Activated naive CD4-positive, alpha-beta T cell treated with anti-CD3 and anti-CD28 coated beads for 36 hours (primary cell): ENCODE measurements at regions of chr18 and their contacts with region 1.

Region 1: DNA sequence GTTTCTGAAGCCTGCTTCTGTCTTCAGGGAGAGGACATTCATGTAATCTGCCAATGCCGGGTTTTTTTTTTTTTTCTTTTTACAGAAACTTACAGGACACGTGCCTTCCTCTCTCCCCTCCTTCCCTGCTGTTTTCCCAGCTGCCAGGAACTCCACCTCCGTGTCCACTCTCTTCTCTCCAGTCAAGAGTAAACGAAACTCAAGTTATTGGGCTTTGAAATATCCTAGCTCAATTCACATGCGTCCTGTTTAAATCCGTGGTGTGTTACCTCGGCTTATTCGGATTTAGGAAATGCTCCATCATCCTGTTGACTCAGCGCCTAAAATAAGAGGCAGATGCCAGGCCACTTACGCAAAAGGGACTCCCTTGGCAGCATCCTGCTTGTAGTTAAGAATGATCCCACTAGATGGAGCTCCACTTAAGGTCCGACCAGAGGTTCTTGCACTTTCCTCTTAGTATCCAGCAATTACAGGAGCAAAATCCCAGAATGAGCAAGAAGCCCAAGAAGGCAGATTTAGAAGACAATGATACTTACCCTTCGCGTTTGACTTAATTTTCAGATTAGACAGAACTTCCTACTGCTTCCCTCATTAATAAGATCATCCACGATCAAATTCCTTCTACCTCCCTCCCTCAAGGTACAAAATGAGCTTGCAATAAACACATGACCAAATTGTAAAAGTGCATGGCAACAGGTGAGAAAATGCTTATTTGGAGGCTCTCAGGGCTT is 97.2 kb upstream of the ZCCHC2 start:
- DNase-seq: peak; percentile 80
- H3K4me3 Mint-ChIP-seq: peak overlapping the region; percentile 3
- H3K27ac Mint-ChIP-seq: peak overlapping the region; percentile 19
- H3K4me1 Mint-ChIP-seq: peaks cover 22% of the 10 kb centered on the region
- H3K27me3 Mint-ChIP-seq: no peaks in the 10 kb centered on the region

Region 2: GRCh38 chr18:61955644-61956043 is 470.0 kb before region 1 on chr18:
- CTCF ChIA-PET with region 1: no interaction called
- intact Hi-C with region 1: loop called (anchors 1 kb)
- DNase-seq: no peak
- H3K4me3 Mint-ChIP-seq: no peak overlapping the region
- H3K27ac Mint-ChIP-seq: no peak overlapping the region
- H3K4me1 Mint-ChIP-seq: peaks cover 30% of the 10 kb centered on the region
- H3K27me3 Mint-ChIP-seq: peaks cover 2% of the 10 kb centered on the region

Region 3: DNA sequence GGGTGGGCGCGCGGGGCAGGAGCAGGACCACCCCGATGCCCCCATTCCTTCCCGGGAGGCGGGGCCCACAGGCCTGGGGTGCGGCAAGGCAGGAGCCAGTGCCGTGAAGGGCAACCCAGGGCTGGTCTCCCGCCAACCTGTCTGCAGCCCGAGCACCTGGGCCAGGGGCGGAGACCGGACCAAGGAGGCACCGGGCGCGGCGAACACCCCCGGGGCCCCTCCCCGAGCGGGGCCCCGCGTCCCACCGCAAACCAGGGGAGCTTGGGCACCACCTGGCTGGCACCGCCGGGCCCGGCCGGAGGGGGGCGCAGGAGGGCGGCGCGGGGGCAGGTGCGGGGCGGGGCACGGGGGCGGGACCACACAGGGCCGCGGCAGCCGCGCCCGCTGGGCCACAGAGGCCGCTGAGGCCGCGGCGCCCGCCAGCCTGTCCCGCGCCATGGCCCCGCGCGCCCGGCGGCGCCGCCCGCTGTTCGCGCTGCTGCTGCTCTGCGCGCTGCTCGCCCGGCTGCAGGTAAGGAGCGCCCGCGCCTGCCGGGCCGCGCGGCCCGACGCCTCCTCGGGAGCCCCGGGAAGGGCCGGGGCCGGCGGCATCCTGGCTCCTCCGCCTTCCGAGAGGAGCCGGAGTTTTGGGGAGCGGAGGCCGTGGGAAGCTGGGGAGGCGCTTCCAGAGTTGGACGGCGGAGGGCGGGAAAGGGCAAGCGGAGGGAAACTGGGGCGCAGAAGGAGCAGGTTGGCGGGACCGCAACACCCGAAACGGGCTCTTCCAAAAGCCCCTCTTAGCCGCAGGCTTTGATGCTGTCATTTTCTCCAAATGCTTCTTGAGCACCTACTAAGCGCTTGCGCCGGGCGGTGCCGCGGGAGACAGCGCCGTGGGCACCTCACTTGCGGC is 100.5 kb before region 1 on chr18 and contains the start of gene TNFRSF11A:
- CTCF ChIA-PET with region 1: interaction called, 6 read pairs
- intact Hi-C with region 1: loop called (anchors 1 kb)
- DNase-seq: peak; percentile 73
- H3K4me3 Mint-ChIP-seq: peak within 1 kb of the TSS; percentile 77
- H3K27ac Mint-ChIP-seq: peak within 1 kb of the TSS; percentile 28
- H3K4me1 Mint-ChIP-seq: peaks cover 19% of the 10 kb centered on the region
- H3K27me3 Mint-ChIP-seq: peaks cover 70% of the 10 kb centered on the region
- total RNA-seq, gene TNFRSF11A: 3.1 to 3.5 TPM

Region 4: GRCh38 chr18:62445386-62445917 is 19.8 kb after region 1 on chr18:
- CTCF ChIA-PET with region 1: no interaction called
- intact Hi-C with region 1: loop called (anchors 2 kb)
- DNase-seq: peak; percentile 18
- H3K4me3 Mint-ChIP-seq: no peak overlapping the region
- H3K27ac Mint-ChIP-seq: no peak overlapping the region
- H3K4me1 Mint-ChIP-seq: no peaks in the 10 kb centered on the region
- H3K27me3 Mint-ChIP-seq: no peaks in the 10 kb centered on the region

Region 5: DNA sequence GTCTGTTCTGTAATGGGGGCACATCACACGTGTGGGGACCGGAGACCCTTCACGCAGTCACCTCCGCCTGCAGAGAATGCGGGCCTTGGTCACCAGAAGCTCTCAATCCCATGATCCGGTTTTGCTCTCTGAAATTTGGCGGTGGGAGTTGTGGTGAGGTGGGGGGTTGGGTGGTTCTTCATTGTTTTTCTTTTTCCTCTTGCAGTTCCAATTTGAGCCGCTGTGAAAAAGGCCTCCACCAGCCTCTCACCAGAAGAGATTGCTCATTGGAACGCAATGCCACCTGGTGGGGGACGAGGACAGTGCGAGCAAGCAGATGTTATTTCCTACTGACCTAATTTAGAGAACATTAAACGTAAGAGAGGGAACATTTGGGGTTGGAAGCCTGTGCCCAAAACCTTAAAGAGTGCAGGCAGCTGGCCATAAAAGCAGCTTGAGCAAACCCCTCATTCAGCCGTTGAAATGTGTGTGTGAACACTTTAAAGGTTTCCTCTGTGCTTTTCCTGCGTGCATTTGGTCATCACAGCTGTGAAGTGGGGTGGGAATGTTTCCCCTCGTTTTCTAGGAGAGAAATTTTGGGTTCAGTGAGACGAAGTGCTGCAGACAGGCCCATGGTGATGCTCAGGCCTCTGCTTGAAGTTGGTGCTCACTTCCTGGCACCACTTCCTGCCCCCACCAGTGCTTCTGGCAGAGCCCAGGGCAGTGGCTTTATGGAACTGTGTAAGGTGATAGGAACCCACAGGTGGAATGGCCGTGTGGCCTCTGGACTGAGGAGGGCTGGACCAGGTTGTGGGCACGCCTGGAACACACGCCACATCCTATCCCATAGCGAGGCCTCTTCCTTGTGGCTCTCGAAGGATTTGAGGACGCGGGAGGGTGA is 158.9 kb after region 1 on chr18:
- CTCF ChIA-PET with region 1: interaction called, 25 read pairs
- intact Hi-C with region 1: loop called (anchors 1 kb)
- DNase-seq: peak; percentile 93
- H3K4me3 Mint-ChIP-seq: peak overlapping the region; percentile 2
- H3K27ac Mint-ChIP-seq: peak overlapping the region; percentile 92
- H3K4me1 Mint-ChIP-seq: peaks cover 42% of the 10 kb centered on the region
- H3K27me3 Mint-ChIP-seq: no peaks in the 10 kb centered on the region

Region 6: DNA sequence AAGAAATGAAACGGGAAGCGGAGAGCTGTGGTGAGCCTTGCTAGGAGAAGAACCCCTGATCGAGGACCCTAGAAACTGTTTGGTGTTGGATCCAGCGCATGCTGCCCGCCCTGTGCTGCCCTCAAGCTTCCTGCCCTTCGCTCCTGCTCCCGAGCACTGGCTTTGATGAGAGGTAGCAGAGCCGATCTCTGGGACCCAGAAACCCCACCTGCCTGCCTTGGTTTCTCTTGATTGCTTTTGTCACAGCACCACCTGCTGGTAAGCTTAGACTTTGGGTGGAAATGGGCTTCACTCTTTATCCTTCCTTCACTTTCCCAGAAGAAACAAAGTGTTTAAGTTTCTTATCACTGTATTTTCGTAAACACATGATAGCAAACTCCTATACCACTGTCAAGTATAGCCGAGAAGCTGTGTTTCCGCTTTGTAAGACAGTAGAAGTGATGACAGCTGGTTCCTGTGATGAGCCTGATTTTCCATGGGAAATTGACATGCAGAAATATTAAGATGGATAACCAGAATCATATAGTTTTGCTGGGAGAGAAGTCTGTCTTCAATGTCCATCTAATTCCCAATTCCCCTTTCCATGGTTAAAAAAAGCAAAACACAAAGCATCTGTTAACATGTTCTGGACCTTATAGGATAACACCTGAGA is 557.1 kb after region 1 on chr18:
- CTCF ChIA-PET with region 1: interaction called, 4 read pairs
- intact Hi-C with region 1: loop called (anchors 1 kb)
- DNase-seq: peak; percentile 75
- H3K4me3 Mint-ChIP-seq: no peak overlapping the region
- H3K27ac Mint-ChIP-seq: no peak overlapping the region
- H3K4me1 Mint-ChIP-seq: no peaks in the 10 kb centered on the region
- H3K27me3 Mint-ChIP-seq: no peaks in the 10 kb centered on the region

Region 7: GRCh38 chr18:64318547-64318946 is 1892.9 kb after region 1 on chr18:
- CTCF ChIA-PET with region 1: no interaction called
- intact Hi-C with region 1: no loop called
- DNase-seq: no peak
- H3K4me3 Mint-ChIP-seq: no peak overlapping the region
- H3K27ac Mint-ChIP-seq: no peak overlapping the region
- H3K4me1 Mint-ChIP-seq: no peaks in the 10 kb centered on the region
- H3K27me3 Mint-ChIP-seq: no peaks in the 10 kb centered on the region